PC-9 (cell line): ENCODE measurements at regions of chr5 and their contacts with region 1.

Region 1: GRCh38 chr5:55220391-55221185 is 6.5 kb downstream of the MCIDAS start:
- DNase-seq: no peak
- H3K4me3 ChIP-seq: no peak overlapping the region
- H3K27ac ChIP-seq: no peak overlapping the region
- H3K4me1 ChIP-seq: peaks cover 26% of the 10 kb centered on the region
- H3K27me3 ChIP-seq: no peaks in the 10 kb centered on the region
- CTCF ChIP-seq: no peak

Region 2: GRCh38 chr5:54590824-54591223 is 629.8 kb before region 1 on chr5:
- CTCF ChIA-PET with region 1: no interaction called
- POLR2A ChIA-PET with region 1: no interaction called
- intact Hi-C with region 1: no loop called
- DNase-seq: no peak
- H3K4me3 ChIP-seq: no peak overlapping the region
- H3K27ac ChIP-seq: no peak overlapping the region
- H3K4me1 ChIP-seq: no peaks in the 10 kb centered on the region
- H3K27me3 ChIP-seq: no peaks in the 10 kb centered on the region
- CTCF ChIP-seq: no peak

Region 3: GRCh38 chr5:55187370-55187769 is 33.2 kb before region 1 on chr5:
- CTCF ChIA-PET with region 1: interaction called, 10 read pairs
- POLR2A ChIA-PET with region 1: no interaction called
- intact Hi-C with region 1: no loop called
- DNase-seq: peak in 1 of 2 experiments; percentile 54
- H3K4me3 ChIP-seq: no peak overlapping the region
- H3K27ac ChIP-seq: no peak overlapping the region
- H3K4me1 ChIP-seq: peaks cover 46% of the 10 kb centered on the region
- H3K27me3 ChIP-seq: no peaks in the 10 kb centered on the region
- CTCF ChIP-seq: peak; percentile 68

Region 4: DNA sequence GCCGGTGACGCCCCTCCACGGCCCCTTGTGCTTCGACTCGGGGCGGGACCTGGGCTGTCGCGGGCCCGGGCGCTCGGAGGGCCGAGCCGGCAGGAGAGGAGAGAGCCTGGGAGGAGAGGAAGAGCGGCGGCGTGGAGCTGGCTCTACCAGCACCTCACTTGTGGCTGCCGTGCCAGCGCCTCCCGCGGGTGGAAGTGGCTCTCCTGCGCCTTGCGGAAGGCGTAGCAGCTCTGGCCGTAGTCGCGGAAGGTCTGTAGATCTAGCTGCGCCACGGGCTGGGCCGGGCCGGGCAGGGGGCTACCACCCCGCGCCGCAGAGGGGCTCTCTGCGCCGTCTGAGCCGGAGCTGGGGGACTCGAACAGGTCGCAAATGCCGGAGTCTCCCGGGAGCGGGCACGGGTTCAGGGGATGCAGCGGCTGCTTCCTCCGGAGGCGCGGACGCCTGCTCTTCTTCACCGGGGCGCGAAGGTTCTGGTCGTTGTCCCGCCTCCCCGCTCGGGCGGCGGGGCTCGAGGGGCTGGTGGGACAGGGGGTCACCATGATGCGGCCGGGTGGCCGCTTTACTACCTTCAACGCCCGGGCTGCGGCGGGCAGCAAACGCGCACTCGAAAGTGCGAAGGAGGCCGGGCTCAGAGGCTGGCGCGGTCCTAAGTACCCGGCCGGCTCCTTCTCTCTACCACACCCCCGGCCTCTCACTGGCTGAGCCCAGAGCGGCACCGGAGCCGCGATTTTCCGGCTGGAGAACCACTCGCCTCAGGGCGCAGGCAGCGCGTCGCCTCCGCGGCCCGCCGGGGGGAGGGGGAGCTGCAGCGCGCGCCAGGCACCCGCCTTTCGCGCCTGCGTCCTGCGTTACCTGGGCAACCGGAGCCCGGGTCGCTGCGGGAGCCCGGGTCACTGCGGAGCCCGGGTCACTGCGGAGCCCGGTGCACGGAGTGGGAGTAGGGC is 12.7 kb after region 1 on chr5 and contains the start of gene CCNO:
- CTCF ChIA-PET with region 1: no interaction called
- POLR2A ChIA-PET with region 1: interaction called, 10 read pairs
- intact Hi-C with region 1: no loop called
- DNase-seq: peak; percentile 81 to 86
- H3K4me3 ChIP-seq: peak within 1 kb of the TSS; percentile 89
- H3K27ac ChIP-seq: peak within 1 kb of the TSS; percentile 38
- H3K4me1 ChIP-seq: peaks cover 22% of the 10 kb centered on the region
- H3K27me3 ChIP-seq: no peaks in the 10 kb centered on the region
- CTCF ChIP-seq: no peak
- total RNA-seq, gene CCNO: 4.7 and 7.1 TPM in 2 replicates

Region 5: DNA sequence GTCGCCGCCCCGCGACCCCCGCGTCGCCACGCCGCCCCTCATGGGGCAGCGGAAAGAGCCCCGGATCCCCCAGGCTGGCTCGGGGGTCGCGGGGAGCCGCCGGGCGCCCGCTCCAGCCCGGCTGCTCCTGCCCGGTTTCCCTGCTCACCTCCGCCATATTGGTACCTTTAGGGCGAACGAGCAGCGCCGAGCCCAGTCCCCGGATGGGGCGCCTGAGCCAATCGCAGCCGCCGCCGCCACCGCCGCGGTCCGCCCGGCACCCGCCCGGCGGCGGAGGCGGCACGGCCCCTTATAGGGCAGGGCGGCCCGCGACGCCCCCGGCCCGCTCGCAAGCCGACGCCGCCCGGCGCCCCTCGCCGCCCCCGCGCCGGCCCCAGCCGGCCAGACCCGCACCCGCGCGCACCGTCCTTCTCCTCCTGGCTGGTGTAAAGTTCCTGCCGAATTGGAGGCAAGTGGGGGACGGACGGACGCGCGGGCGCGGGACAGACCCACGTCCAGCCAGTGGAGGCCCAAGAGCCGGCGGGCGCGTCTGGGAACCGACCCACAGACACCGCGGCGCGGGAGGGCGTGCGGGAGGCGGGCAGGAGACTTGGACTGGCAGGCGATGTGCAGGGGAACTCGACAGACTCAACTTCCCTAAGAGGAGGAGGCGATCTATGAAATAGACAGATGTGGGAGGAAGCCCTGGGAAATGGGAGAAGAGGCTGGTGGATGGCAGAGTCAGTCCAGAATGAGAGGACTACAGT is 1731.5 kb after region 1 on chr5 and contains the start of gene MIER3:
- CTCF ChIA-PET with region 1: no interaction called
- POLR2A ChIA-PET with region 1: no interaction called
- intact Hi-C with region 1: no loop called
- DNase-seq: peak in 1 of 2 experiments; percentile 73
- H3K4me3 ChIP-seq: peak within 1 kb of the TSS; percentile 92
- H3K27ac ChIP-seq: no peak within 1 kb of the TSS
- H3K4me1 ChIP-seq: 0 out of 2 replicates have a peak, but pooled peaks cover 5% of the 10 kb centered on the region
- H3K27me3 ChIP-seq: no peaks in the 10 kb centered on the region
- CTCF ChIP-seq: no peak
- total RNA-seq, gene MIER3: 16.4 and 17.3 TPM in 2 replicates